ENCODE measurements at regions of chr2 and their contacts with region 1.

Region 1: DNA sequence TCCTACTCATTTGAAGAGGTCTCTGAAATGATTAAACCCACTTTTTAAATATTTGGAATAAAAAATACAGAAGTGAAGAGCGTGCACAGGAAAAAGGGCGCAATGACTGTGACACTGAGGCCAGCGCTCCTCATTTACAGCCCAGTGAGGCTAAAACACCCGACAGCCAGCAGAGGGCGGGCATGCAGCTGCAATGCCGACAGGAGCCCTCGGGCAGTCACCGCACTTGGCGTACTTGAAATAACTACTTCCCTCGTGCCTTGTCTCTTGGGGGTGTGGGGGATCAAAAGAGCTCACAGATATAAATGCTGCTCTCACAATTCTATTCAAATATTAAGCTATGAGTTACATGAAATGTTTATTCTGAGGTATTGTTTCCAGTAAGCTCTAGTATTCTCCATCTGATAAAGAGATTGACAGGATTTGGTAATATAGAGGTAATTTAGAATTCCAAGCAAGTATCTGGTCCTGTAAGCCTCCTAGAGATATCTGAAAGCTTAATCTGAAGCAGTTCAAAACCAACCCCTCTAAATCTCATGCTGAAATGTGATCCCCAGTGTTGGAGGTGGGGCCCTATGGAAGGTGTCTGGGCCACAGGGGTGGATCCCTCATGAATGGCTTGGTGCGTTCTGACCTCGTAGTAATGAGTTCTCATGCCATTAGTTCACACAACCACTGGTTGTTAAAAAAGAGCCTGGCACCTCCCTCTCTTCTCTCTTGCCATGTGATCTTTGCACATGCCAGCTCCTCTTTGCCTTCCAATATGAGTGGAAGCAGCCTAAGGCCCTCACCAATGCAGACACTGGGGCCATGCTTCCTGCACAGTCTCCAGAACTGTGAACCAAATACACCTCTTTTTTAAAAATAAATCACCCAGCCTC is 93.6 kb downstream of the ZAP70 start:
- DNase-seq: peak; percentile 89
- ATAC-seq: peak; percentile 98

Region 2: DNA sequence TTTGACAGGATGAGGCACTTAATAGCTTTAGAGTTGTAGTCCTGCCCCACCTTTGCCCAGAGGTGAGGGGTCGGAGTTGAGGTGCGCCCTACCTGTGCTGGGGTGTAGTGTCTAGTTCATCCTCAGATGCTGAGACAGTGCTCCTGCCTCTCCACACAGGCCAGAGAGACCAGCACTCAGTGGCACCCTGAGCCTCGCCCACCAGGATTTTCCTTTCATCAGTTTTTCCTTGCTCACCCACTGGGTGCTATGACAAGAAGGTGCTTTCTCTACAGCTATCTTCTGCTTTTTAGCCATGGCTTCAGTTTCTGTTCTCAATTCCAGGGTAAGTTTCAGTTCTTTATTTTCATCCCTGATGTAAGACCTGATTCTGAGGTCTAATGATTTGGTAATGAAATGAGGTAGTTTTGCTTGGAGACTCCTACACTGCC is 205.6 kb after region 1 on chr2:
- intact Hi-C with region 1: no loop called
- DNase-seq: no peak
- ATAC-seq: peak; percentile 69

Region 3: DNA sequence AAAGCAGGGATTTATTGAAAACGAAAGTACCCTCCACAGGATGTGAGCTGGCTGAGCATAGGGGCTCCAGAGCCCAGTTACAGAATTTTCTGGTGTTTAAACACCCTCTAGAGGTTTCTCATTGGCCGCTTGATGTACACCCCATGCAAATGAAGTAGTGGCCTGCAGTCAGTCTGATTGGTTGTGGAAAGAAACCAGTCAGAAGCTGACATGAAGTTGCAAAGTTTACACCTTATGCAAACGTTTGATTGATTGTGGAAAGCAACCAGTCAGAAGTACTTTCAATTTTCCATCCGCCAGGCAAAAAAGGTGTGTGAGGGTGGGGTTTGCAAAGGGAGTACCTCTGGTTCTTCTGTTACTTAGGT is 342.3 kb after region 1 on chr2:
- intact Hi-C with region 1: loop called (anchors 10 kb)
- DNase-seq: no peak
- ATAC-seq: peak; percentile 93

Region 4: DNA sequence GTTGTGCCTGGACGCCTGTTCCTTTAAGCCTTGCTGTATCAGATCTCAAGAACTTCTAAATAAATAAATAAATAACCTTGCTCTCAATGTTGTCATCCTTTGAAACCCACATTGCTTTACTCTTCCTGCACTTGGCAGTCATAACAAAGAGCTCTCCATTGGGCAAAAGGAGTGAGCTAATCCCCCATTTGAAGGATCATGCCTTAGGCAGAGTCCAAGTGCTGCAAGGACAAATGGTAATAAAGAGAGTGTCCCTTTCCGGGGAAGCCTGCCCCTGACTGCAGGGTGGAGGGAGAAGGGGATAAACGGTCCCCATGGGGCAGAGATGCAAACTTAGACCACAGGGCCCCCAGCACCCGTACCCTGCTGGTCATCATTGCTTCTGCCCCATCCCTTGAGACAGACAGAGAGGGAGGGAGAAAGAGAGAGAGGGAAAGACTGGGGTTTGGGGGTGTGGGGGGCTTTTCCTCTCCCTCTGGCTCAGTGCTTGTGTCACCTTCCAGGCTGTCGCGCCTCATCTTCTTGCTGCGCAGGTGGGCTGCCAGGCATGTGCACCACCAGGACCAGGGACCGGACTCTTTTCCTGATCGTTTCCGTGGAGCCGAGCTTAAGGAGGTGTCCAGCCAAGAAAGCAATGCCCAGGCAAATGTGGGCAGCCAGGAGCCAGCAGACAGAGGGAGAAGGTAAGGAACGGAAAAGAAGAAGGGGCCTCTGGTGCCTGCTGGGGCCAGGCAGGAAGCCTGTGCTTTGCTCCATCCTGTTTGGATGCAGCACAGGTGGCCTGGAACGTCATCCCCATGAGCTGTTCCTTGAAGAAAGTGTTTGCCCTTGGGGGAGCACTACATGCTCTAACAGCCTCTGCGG is 572.9 kb after region 1 on chr2:
- intact Hi-C with region 1: loop called (anchors 5 kb)
- DNase-seq: no peak
- ATAC-seq: no peak